Mammary epithelial cell (primary cell): ENCODE measurements at regions of chr7 and their contacts with region 1.

Region 1: DNA sequence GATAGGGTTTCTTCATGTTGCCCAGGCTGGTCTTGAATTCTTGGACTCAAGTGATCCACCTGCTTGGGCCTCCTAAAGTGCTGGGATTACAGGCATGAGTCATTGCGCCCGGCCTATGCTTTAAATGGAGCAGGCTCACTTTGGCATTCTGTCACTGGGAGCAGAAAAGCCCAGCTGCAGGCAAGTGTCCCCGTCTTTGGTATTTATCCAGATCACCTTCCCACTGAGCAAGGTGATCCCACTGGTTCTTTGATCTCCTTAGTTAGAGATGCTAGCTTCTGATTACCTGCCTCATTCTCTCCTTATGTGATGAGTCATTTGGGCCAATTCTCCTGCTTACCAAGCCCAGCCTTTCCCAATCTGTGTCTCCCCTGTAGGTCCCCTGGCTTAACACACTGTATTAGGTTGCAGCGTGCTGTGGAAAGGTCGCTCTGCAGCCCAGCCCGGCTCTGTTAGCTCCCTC is 39.3 kb downstream of the SPDYE5 start:
- DNase-seq: peak; percentile 43
- H3K4me3 ChIP-seq: no peak overlapping the region
- H3K27ac ChIP-seq: no peak overlapping the region
- H3K4me1 ChIP-seq: peaks cover 2% of the 10 kb centered on the region
- H3K27me3 ChIP-seq: no peaks in the 10 kb centered on the region
- CTCF ChIP-seq: no peak

Region 2: GRCh38 chr7:75565132-75565837 is 33.9 kb after region 1 on chr7:
- CTCF ChIA-PET with region 1: no interaction called
- dilution Hi-C with region 1: no loop called
- in situ Hi-C with region 1: no loop called
- intact Hi-C with region 1: loop called (anchors 5 kb)
- DNase-seq: peak; percentile 88
- H3K4me3 ChIP-seq: no peak overlapping the region
- H3K27ac ChIP-seq: no peak overlapping the region
- H3K4me1 ChIP-seq: peaks cover 11% of the 10 kb centered on the region
- H3K27me3 ChIP-seq: no peaks in the 10 kb centered on the region
- CTCF ChIP-seq: no peak

Region 3: GRCh38 chr7:75762314-75762917 is 231.0 kb after region 1 on chr7:
- CTCF ChIA-PET with region 1: no interaction called
- dilution Hi-C with region 1: no loop called
- in situ Hi-C with region 1: no loop called
- intact Hi-C with region 1: loop called (anchors 2 kb)
- DNase-seq: peak; percentile 40
- H3K4me3 ChIP-seq: no peak overlapping the region
- H3K27ac ChIP-seq: no peak overlapping the region
- H3K4me1 ChIP-seq: no peaks in the 10 kb centered on the region
- H3K27me3 ChIP-seq: no peaks in the 10 kb centered on the region
- CTCF ChIP-seq: peak; percentile 77